Activated naive CD4-positive, alpha-beta T cell treated with anti-CD3 and anti-CD28 coated beads for 36 hours (primary cell): ENCODE measurements at regions of chr20 and their contacts with region 1.

Region 1: GRCh38 chr20:4082406-4083097 is 67.2 kb upstream of the RNF24 start:
- DNase-seq: peak; percentile 67
- H3K4me3 Mint-ChIP-seq: peak overlapping the region; percentile 57
- H3K27ac Mint-ChIP-seq: peak overlapping the region; percentile 91
- H3K4me1 Mint-ChIP-seq: peaks cover 44% of the 10 kb centered on the region
- H3K27me3 Mint-ChIP-seq: peaks cover 4% of the 10 kb centered on the region

Region 2: DNA sequence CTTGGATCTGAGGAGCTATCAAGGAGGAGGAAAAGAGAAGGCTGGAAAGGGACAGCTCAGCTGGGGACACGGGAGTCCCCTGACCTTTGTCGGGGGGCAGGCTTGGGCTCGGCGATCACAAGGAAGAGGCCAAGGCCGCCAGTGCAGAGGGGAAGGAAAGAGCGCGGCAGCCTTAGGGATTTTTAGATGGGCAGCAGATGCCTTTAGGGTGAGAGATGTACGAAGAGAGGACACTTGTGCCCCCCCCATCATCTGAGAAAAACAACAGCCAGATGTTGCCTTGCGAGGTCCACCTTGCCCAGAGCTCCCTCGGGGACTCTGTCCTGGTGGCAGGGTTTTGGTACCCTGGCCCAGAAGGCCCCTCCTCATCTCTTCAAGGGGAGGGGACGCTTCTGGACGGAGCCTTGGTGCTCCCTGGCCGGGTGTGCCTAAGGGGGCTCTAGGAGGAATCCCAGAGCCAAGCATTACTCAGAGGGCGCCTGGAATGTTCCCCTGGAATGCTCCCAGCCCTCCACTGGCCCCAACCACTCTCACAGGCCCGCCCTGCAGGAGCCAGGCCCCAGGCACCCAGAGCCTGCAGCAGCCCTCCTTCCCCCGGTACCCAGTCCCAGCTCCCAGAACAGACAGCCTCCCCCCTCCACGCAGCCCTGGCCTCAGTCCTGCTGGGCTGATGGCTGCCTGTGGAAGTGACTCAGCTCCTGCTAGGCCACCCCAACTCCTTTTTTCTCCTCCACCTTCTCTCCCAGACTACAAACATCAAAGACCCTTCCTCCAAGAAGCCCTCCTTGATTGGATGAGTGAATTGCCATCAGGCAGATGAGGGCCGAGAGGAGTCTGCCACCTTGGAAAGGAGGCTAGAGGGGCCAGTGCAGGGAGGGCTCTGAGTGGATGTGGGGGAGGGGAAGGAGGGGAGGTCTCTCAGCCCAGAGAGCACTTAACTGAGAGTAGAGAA is 402.5 kb before region 1 on chr20:
- CTCF ChIA-PET with region 1: interaction called, 6 read pairs
- intact Hi-C with region 1: loop called (anchors 1 kb)
- DNase-seq: no peak
- H3K4me3 Mint-ChIP-seq: no peak overlapping the region
- H3K27ac Mint-ChIP-seq: no peak overlapping the region
- H3K4me1 Mint-ChIP-seq: no peaks in the 10 kb centered on the region
- H3K27me3 Mint-ChIP-seq: peaks cover 49% of the 10 kb centered on the region

Region 3: GRCh38 chr20:3786665-3787323 is 295.8 kb before region 1 on chr20 and contains the start of gene CENPB:
- CTCF ChIA-PET with region 1: interaction called, 5 read pairs
- intact Hi-C with region 1: loop called (anchors 1 kb)
- DNase-seq: peak; percentile 91
- H3K4me3 Mint-ChIP-seq: peak within 1 kb of the TSS; percentile 83
- H3K27ac Mint-ChIP-seq: peak within 1 kb of the TSS; percentile 80
- H3K4me1 Mint-ChIP-seq: peaks cover 39% of the 10 kb centered on the region
- H3K27me3 Mint-ChIP-seq: no peaks in the 10 kb centered on the region
- total RNA-seq, gene CENPB: 29.1 to 30.3 TPM

Region 4: GRCh38 chr20:3911956-3912355 is 170.6 kb before region 1 on chr20:
- CTCF ChIA-PET with region 1: interaction called, 5 read pairs
- intact Hi-C with region 1: loop called (anchors 1 kb)
- DNase-seq: no peak
- H3K4me3 Mint-ChIP-seq: no peak overlapping the region
- H3K27ac Mint-ChIP-seq: peak overlapping the region; percentile 39
- H3K4me1 Mint-ChIP-seq: peaks cover 61% of the 10 kb centered on the region
- H3K27me3 Mint-ChIP-seq: no peaks in the 10 kb centered on the region

Region 5: DNA sequence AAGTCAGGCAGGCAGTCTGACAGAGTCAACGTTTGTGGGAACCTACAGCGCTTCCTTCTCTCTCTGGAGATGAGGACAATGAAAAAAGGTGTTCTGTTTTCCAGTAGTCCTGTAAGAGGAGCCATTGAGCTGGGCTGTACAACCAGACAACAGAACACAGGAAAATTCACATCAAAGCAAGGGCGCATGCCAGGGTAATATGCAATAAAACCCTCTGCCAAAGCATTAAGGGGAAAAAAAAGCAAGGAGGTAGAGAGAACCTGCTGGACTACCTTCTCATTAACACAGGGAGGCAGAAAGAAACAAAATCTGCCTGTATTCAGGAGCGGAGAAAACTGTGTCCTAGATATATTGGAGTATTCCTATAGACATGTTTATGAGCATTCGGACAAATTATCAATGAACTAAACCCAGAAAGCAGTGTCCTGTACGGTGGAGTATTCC is 68.5 kb before region 1 on chr20:
- CTCF ChIA-PET with region 1: interaction called, 29 read pairs
- intact Hi-C with region 1: loop called (anchors 1 kb)
- DNase-seq: peak; percentile 52
- H3K4me3 Mint-ChIP-seq: peak overlapping the region; percentile 81
- H3K27ac Mint-ChIP-seq: no peak overlapping the region
- H3K4me1 Mint-ChIP-seq: peaks cover 32% of the 10 kb centered on the region
- H3K27me3 Mint-ChIP-seq: no peaks in the 10 kb centered on the region